Activated CD4-positive, alpha-beta T cell treated with anti-CD3 and anti-CD28 coated beads for 36 hours (primary cell): ENCODE measurements at regions of chr12 and their contacts with region 1.

Region 1: GRCh38 chr12:89352492-89353187 is at the start of gene DUSP6:
- DNase-seq: peak; percentile 96
- ATAC-seq: peak; percentile 83
- H3K4me3 Mint-ChIP-seq: peak within 1 kb of the TSS; percentile 86
- H3K27ac Mint-ChIP-seq: peak within 1 kb of the TSS; percentile 92
- H3K4me1 Mint-ChIP-seq: peaks cover 46% of the 10 kb centered on the region
- H3K27me3 Mint-ChIP-seq: no peaks in the 10 kb centered on the region
- total RNA-seq, gene DUSP6: 49.9 to 60.9 TPM

Region 2: GRCh38 chr12:88035271-88035906 is 1317.3 kb before region 1 on chr12:
- CTCF ChIA-PET with region 1: no interaction called
- POLR2A ChIA-PET with region 1: no interaction called
- intact Hi-C with region 1: loop called in 1 of 2 experiments (anchors 5 kb)
- DNase-seq: peak; percentile 94
- ATAC-seq: peak; percentile 98
- H3K4me3 Mint-ChIP-seq: peak overlapping the region; percentile 82
- H3K27ac Mint-ChIP-seq: peak overlapping the region; percentile 90
- H3K4me1 Mint-ChIP-seq: peaks cover 54% of the 10 kb centered on the region
- H3K27me3 Mint-ChIP-seq: no peaks in the 10 kb centered on the region

Region 3: DNA sequence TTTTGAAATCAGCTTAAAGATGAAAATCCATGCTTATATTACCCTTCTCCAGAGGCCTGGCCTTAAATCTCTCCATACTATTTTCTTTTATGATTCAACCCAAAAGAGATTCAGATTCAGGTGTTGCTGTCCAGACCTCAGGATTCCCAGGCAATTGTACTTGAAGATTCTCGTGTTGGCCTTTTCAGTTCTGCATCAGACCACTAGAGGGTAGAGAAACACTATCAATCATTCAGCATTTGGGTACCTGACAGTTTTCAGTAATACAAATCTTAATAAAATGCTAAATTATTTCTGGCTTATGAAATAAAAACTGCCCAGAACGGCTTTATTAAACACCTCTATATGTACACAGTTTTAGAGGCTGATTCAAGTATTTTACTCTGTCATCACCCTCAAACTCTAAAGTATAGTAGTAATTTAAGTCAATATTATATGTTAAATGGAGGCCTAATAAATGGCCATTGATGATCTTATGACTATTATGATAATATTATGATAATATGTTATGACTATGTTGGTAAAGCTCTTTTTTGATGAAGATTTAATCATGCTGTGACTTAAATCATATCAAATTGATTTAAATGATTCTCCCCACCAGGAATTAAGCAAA is 301.5 kb before region 1 on chr12:
- CTCF ChIA-PET with region 1: interaction called, 4 read pairs
- POLR2A ChIA-PET with region 1: no interaction called
- intact Hi-C with region 1: loop called in 1 of 2 experiments (anchors 2 kb)
- DNase-seq: peak; percentile 22
- ATAC-seq: peak; percentile 74
- H3K4me3 Mint-ChIP-seq: no peak overlapping the region
- H3K27ac Mint-ChIP-seq: peak overlapping the region; percentile 62
- H3K4me1 Mint-ChIP-seq: peaks cover 19% of the 10 kb centered on the region
- H3K27me3 Mint-ChIP-seq: no peaks in the 10 kb centered on the region

Region 4: DNA sequence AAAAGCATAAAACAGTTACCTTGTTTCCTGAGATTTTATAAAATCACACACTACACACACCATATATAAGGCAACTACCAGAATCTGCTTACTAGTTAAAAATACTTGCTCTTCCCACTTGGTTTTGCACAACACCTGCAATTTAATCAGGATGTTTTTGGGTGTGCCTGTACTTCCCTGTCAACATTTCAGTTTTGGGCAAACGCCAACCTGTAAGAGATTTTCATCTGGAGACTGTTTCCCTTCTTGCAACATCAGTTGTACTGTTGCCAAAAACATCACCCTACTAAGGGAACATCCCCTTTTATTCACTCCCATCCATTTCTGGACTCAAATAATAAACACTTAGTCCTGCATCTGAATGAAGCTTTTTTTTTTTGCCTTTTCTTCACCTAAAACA is 172.7 kb before region 1 on chr12:
- CTCF ChIA-PET with region 1: no interaction called
- POLR2A ChIA-PET with region 1: interaction called, 3 read pairs
- intact Hi-C with region 1: loop called in 1 of 2 experiments (anchors 5 kb)
- DNase-seq: no peak
- ATAC-seq: no peak
- H3K4me3 Mint-ChIP-seq: no peak overlapping the region
- H3K27ac Mint-ChIP-seq: peak overlapping the region; percentile 71
- H3K4me1 Mint-ChIP-seq: peaks cover 33% of the 10 kb centered on the region
- H3K27me3 Mint-ChIP-seq: no peaks in the 10 kb centered on the region

Region 5: GRCh38 chr12:89393551-89394121 is 41.0 kb after region 1 on chr12:
- CTCF ChIA-PET with region 1: no interaction called
- POLR2A ChIA-PET with region 1: no interaction called
- intact Hi-C with region 1: loop called (anchors 2 kb)
- DNase-seq: no peak
- ATAC-seq: no peak
- H3K4me3 Mint-ChIP-seq: no peak overlapping the region
- H3K27ac Mint-ChIP-seq: no peak overlapping the region
- H3K4me1 Mint-ChIP-seq: peaks cover 42% of the 10 kb centered on the region
- H3K27me3 Mint-ChIP-seq: no peaks in the 10 kb centered on the region

Region 6: GRCh38 chr12:89421092-89421835 is 68.6 kb after region 1 on chr12:
- CTCF ChIA-PET with region 1: no interaction called
- POLR2A ChIA-PET with region 1: no interaction called
- intact Hi-C with region 1: no loop called
- DNase-seq: no peak
- ATAC-seq: no peak
- H3K4me3 Mint-ChIP-seq: no peak overlapping the region
- H3K27ac Mint-ChIP-seq: no peak overlapping the region
- H3K4me1 Mint-ChIP-seq: no peaks in the 10 kb centered on the region
- H3K27me3 Mint-ChIP-seq: no peaks in the 10 kb centered on the region

Region 7: DNA sequence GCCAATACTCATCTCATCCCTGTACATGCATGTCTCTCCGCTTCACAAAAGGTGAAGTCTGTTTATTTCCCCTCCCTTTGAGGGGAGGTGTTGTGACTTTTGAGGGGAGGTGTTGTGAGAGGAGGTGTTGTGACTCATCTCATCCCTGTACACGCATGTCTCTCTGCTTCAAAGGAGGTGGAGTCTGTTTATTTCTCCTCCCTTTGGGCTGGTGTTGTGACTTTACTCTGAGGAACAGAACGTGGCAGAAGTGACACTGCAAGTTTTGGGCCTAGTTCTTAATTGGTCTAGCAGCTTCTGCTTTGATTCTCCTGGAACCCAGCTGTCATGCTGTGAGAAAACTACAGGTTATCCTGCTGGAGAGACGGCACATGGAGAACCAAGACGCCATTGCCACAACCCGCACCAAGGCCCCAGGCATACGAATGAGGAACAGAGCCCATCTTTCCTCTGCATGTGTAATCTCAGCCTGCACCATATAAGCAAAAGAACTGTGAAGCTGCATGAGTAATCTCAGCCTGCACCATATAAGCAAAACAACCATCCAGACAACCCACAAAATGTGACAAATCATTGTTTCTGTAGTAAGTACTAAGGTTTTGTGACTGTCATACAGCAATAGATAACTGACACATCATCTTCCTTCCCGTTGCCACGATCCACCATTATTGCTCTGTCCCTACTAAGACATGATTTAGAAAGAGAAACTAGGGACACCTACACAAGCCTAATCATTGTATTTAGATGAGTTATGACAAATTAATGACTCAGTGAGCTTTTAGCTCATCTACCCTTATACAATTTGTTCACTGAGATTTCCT is 142.0 kb after region 1 on chr12:
- CTCF ChIA-PET with region 1: interaction called, 4 read pairs
- POLR2A ChIA-PET with region 1: no interaction called
- intact Hi-C with region 1: loop called (anchors 1 kb)
- DNase-seq: peak; percentile 72
- ATAC-seq: peak; percentile 90
- H3K4me3 Mint-ChIP-seq: peak overlapping the region; percentile 28
- H3K27ac Mint-ChIP-seq: peak overlapping the region; percentile 92
- H3K4me1 Mint-ChIP-seq: peaks cover 27% of the 10 kb centered on the region
- H3K27me3 Mint-ChIP-seq: no peaks in the 10 kb centered on the region

Region 8: GRCh38 chr12:89862511-89863179 is 510.0 kb after region 1 on chr12:
- CTCF ChIA-PET with region 1: no interaction called
- POLR2A ChIA-PET with region 1: no interaction called
- intact Hi-C with region 1: loop called in 1 of 2 experiments (anchors 2 kb)
- DNase-seq: peak; percentile 45
- ATAC-seq: peak; percentile 40
- H3K4me3 Mint-ChIP-seq: peak overlapping the region; percentile 70
- H3K27ac Mint-ChIP-seq: peak overlapping the region; percentile 98
- H3K4me1 Mint-ChIP-seq: peaks cover 64% of the 10 kb centered on the region
- H3K27me3 Mint-ChIP-seq: no peaks in the 10 kb centered on the region

Region 9: GRCh38 chr12:90484094-90484493 is 1131.5 kb after region 1 on chr12:
- CTCF ChIA-PET with region 1: no interaction called
- POLR2A ChIA-PET with region 1: no interaction called
- intact Hi-C with region 1: no loop called
- DNase-seq: no peak
- ATAC-seq: no peak
- H3K4me3 Mint-ChIP-seq: no peak overlapping the region
- H3K27ac Mint-ChIP-seq: no peak overlapping the region
- H3K4me1 Mint-ChIP-seq: no peaks in the 10 kb centered on the region
- H3K27me3 Mint-ChIP-seq: peaks cover 3% of the 10 kb centered on the region